Right ventricle myocardium superior (tissue), 1 donor: ENCODE measurements at regions of chr2 and their contacts with region 1.

Region 1: DNA sequence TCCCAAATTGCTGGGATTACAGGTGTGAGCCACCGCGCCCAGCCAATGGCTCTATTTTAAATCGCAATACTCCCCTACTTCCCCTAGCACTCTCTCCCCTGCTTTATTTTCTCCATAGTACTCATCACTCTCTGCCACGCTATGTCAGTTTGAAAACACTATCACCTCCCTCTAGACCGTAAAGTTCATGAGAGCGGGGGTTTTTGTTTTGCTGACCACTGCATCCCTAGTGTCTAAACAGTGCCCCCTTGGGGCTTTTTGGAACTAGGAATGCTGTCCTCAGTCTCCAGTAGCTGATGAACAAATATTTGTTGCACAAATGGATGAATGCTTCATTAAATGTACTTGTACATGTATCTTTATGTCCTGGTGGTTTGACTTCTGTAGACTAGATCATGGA is 44.1 kb downstream of the ATOH8 start:
- DNase-seq: no peak
- ATAC-seq: peak; percentile 72

Region 2: DNA sequence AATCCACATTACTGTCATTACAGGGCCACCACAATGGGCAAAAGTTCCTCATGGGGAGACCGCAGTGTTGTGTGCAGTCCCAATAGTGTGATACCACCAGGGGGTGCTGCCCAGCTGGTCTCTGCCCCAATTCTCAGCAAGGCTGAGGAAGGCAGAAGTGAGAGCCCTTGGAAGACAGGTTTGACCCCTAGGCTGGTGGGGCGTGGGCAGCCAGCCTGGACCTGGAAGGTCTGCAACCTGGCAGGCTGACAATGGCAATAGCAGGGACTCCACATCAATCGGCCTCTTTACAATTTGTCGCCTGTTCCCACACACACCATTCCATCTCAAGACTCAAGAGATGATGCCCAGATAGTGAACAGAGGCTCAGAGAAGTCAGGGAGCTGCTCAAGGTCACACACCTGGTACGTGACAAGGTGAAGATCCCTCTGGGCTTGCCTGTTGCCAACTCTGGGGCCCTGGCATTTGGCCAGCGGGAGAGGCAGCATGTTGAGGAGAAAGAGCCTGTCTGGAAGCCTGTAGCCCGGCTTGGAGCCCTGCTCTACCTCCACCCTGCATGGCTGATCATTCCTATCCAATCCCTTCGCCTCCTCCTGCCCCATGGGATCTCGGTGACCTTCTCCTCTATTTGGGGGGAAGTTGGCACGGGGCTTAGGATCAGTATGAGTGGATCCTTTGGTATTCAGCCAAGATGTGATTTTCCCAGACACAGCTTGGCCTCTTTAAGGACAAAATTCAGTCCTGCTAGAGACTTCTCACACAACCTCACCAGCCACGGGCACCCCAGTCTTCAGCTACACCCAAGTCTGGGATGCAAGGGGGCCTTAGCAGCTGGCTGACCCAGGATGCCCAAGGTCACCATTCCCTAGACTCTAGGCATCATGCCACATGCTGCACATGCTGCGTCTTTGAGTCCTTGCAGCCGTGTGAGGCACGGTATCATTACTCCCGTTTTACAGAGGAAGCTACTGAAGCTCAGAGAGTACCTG is 47.0 kb before region 1 on chr2:
- intact Hi-C with region 1: loop called (anchors 5 kb)
- DNase-seq: peak; percentile 85
- ATAC-seq: peak; percentile 67